ENCODE measurements at regions of chr9 and their contacts with region 1.

Region 1: GRCh38 chr9:68690088-68690487 is 15.0 kb upstream of the PIP5K1B start:
- DNase-seq: peak; percentile 56
- ATAC-seq: peak; percentile 88

Region 2: GRCh38 chr9:68625559-68625958 is 64.5 kb before region 1 on chr9:
- intact Hi-C with region 1: loop called (anchors 5 kb)
- DNase-seq: no peak
- ATAC-seq: no peak

Measured in Right ventricle myocardium inferior (tissue), 1 donor.